ENCODE measurements at regions of chr2 and their contacts with region 1.

Region 1: GRCh38 chr2:126776692-126777619 is 121.0 kb downstream of the GYPC start:
- DNase-seq: peak; percentile 79 to 87
- ATAC-seq: peak; percentile 90 to 97 (median 94)
- H3K4me3 ChIP-seq: peak overlapping the region; percentile 36 to 79 (median 68)
- H3K27ac ChIP-seq: peak overlapping the region; percentile 34 to 89 (median 76)
- H3K4me1 ChIP-seq: peaks cover 0 to 11% (median 0%) of the 10 kb centered on the region in 9 donors
- H3K27me3 ChIP-seq: peaks cover 0 to 29% (median 3%) of the 10 kb centered on the region in 7 donors
- CTCF ChIP-seq: peak; percentile 87 to 98 (median 96)

Region 2: DNA sequence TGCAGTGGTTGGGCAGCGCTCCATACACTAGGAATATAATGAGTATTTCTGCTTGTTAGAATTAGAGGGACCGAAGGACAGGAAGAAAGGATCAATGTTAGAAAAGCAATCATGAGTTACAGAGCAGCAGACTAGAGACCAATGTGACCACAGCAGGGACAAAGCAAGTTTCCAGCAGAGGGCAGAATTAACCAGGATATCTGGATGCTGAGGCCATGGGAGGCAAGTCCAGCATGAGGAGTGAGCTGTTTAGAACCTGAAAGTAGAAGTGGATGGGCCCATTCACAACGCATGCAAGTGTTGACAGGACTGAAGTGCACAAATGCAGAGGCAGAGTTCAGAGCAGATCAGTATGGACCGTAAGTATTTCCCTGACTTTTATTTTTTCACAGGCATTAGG is 1031.4 kb before region 1 on chr2:
- intact Hi-C with region 1: loop called in 5 of 10 experiments (anchors 5 to 10 kb)
- DNase-seq: peak in 1 of 2 donors; percentile 26
- ATAC-seq: peak in 5 of 8 donors; percentile 26 to 73 (median 59)
- H3K4me3 ChIP-seq: no peak overlapping the region
- H3K27ac ChIP-seq: no peak overlapping the region
- H3K4me1 ChIP-seq: no peaks in the 10 kb centered on the region
- H3K27me3 ChIP-seq: no peaks in the 10 kb centered on the region
- CTCF ChIP-seq: peak in 6 of 9 donors; percentile 39 to 50 (median 48)

Region 3: DNA sequence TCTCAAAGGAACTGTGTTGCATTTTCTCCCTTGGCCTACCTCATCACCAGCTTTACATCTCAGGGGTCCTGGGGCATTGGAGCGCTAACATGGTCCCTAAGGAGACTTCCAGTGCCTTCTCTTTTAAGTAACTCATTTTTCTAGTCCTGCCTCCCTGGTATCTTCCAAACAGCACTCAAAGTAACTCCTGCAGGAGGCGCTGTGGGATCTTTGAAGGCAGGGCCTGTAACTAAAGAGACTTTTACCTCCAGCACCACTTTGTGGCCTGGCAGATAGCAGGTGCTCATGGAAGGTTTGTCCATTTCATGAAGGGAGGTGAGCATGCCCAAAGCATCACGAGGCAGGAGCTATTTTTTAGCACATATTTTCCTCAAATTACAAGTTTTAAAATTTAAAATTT is 532.0 kb before region 1 on chr2:
- intact Hi-C with region 1: loop called in 9 of 10 experiments (anchors 5 to 10 kb)
- DNase-seq: peak; percentile 21 to 26
- ATAC-seq: peak in 1 of 8 donors; percentile 42
- H3K4me3 ChIP-seq: no peak overlapping the region
- H3K27ac ChIP-seq: no peak overlapping the region
- H3K4me1 ChIP-seq: peaks cover 0 to 7% (median 0%) of the 10 kb centered on the region in 9 donors
- H3K27me3 ChIP-seq: peaks cover 0 to 5% (median 0%) of the 10 kb centered on the region in 7 donors
- CTCF ChIP-seq: peak in 7 of 9 donors; percentile 40 to 56 (median 44)

Region 4: GRCh38 chr2:126368758-126369157 is 408.2 kb before region 1 on chr2:
- intact Hi-C with region 1: loop called in 2 of 10 experiments (anchors 10 kb)
- DNase-seq: no peak
- ATAC-seq: peak in 6 of 8 donors; percentile 33 to 69 (median 46)
- H3K4me3 ChIP-seq: no peak overlapping the region
- H3K27ac ChIP-seq: no peak overlapping the region
- H3K4me1 ChIP-seq: peaks cover 0 to 26% (median 9%) of the 10 kb centered on the region in 9 donors
- H3K27me3 ChIP-seq: no peaks in the 10 kb centered on the region
- CTCF ChIP-seq: no peak

Region 5: GRCh38 chr2:126527836-126528507 is 249.0 kb before region 1 on chr2:
- intact Hi-C with region 1: loop called (anchors 1 to 5 kb)
- DNase-seq: peak; percentile 51 to 70
- ATAC-seq: peak in 7 of 8 donors; percentile 70 to 90 (median 78)
- H3K4me3 ChIP-seq: no peak overlapping the region
- H3K27ac ChIP-seq: no peak overlapping the region
- H3K4me1 ChIP-seq: no peaks in the 10 kb centered on the region
- H3K27me3 ChIP-seq: no peaks in the 10 kb centered on the region
- CTCF ChIP-seq: peak; percentile 40 to 84 (median 72)

Region 6: GRCh38 chr2:126657636-126658318 is 119.2 kb before region 1 on chr2:
- intact Hi-C with region 1: loop called in 7 of 10 experiments (anchors 2 to 10 kb)
- DNase-seq: peak; percentile 76 to 83
- ATAC-seq: peak; percentile 50 to 91 (median 72)
- H3K4me3 ChIP-seq: peak overlapping the region; percentile 67 to 90 (median 77)
- H3K27ac ChIP-seq: peak overlapping the region; percentile 96 to 100 (median 99)
- H3K4me1 ChIP-seq: peaks cover 22 to 77% (median 70%) of the 10 kb centered on the region in 9 donors
- H3K27me3 ChIP-seq: no peaks in the 10 kb centered on the region
- CTCF ChIP-seq: peak in 1 of 9 donors; percentile 6

Region 7: DNA sequence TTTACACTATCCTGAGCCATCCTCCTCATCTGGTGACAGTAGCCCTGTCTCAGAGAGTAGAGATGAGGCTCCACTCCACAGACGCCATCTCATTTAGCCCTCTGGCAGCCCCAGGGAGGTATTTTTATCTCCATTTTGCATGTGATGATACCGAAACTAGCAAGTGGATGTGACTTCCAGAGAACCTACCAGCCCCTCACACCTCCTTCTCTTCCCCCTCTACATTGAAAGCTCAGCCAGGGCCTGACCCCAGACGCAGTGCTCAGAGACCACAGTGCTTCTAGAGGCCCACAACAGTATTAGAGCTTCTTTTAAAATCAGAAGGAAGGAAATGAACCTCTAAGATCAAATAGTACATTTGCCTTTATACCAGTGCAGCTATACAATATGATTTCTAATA is 112.7 kb before region 1 on chr2:
- intact Hi-C with region 1: loop called in 6 of 10 experiments (anchors 5 to 10 kb)
- DNase-seq: no peak
- ATAC-seq: no peak
- H3K4me3 ChIP-seq: no peak overlapping the region
- H3K27ac ChIP-seq: peak overlapping the region in 9 of 10 donors; percentile 6 to 99 (median 53)
- H3K4me1 ChIP-seq: peaks cover 22 to 97% (median 92%) of the 10 kb centered on the region in 9 donors
- H3K27me3 ChIP-seq: no peaks in the 10 kb centered on the region
- CTCF ChIP-seq: no peak

Region 8: GRCh38 chr2:126793885-126794613 is 17.1 kb after region 1 on chr2:
- intact Hi-C with region 1: no loop called
- DNase-seq: no peak
- ATAC-seq: no peak
- H3K4me3 ChIP-seq: no peak overlapping the region
- H3K27ac ChIP-seq: no peak overlapping the region
- H3K4me1 ChIP-seq: no peaks in the 10 kb centered on the region
- H3K27me3 ChIP-seq: peaks cover 0 to 62% (median 29%) of the 10 kb centered on the region in 7 donors
- CTCF ChIP-seq: no peak

Region 9: DNA sequence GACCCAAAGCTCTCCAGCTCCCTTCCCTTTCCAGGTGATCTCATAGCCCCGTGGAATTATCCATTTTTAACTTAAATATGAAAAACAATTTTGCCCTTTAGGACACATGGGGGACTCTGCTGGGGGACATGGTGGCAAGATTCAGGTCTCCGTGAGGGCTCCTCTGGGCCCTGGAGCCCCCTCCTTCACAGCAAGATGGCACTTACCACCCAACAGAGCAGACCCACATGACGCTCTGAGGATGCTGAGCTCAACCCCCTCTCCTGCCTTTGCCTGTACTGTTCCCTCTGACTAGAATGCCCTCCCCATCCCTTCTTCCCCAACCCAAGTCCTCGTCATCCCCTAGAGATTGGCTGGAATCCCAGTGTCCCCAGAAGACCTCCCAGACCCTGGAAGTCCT is 138.9 kb after region 1 on chr2:
- intact Hi-C with region 1: no loop called
- DNase-seq: no peak
- ATAC-seq: no peak
- H3K4me3 ChIP-seq: no peak overlapping the region
- H3K27ac ChIP-seq: no peak overlapping the region
- H3K4me1 ChIP-seq: no peaks in the 10 kb centered on the region
- H3K27me3 ChIP-seq: peaks cover 0 to 5% (median 0%) of the 10 kb centered on the region in 7 donors
- CTCF ChIP-seq: no peak

Region 10: DNA sequence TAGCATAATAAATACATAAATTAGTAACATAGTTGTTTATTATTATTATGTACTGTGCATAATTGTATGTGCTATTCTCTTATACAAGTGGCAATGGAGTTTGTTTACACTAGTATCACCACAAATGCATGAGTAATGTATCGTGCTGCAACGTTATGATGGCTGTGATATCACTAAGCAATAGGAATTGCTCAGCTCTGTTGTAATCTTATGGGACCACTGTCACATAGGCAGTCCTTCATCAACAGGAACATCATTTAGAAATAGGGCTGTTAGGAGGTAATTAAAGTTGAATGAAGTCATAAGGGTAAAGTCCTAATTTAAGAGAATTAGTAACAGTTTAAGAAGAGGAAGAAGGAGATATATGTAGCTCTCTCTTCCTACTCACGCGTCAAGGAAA is 155.6 kb after region 1 on chr2:
- intact Hi-C with region 1: no loop called
- DNase-seq: no peak
- ATAC-seq: no peak
- H3K4me3 ChIP-seq: no peak overlapping the region
- H3K27ac ChIP-seq: no peak overlapping the region
- H3K4me1 ChIP-seq: no peaks in the 10 kb centered on the region
- H3K27me3 ChIP-seq: peaks cover 0 to 29% (median 9%) of the 10 kb centered on the region in 7 donors
- CTCF ChIP-seq: no peak